Ovary (tissue), 10 donors: ENCODE measurements at regions of chr14 and their contacts with region 1.

Region 1: GRCh38 chr14:72942782-72943333 is 16.6 kb downstream of the DCAF4 start:
- DNase-seq: no peak
- H3K4me3 ChIP-seq: no peak overlapping the region
- H3K27ac ChIP-seq: no peak overlapping the region
- H3K4me1 ChIP-seq: peaks cover 4% of the 10 kb centered on the region
- H3K27me3 ChIP-seq: no peaks in the 10 kb centered on the region
- CTCF ChIP-seq: no peak
- EP300 ChIP-seq: no peak
- POLR2A ChIP-seq: no peak

Region 2: DNA sequence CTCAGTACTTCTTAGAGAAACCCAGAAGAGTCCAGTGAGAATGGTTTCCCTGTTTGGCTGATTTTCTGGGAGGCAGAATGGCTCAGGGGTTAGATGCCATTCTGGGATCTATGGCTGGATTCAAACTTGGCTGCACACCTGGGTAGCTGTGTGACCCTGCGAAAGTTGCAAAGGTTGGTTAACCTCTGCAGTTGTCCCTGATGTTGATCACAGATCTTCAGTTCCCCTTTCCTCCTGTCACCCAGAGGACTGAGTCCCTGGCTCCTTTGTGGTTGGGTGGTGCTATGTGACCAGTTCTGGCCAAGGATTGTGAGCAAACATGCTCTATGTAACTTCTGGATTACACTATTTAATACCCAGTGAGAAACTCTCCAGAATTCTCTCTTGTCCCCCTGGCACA is 592.6 kb before region 1 on chr14:
- intact Hi-C with region 1: no loop called
- DNase-seq: no peak
- H3K4me3 ChIP-seq: no peak overlapping the region
- H3K27ac ChIP-seq: no peak overlapping the region
- H3K4me1 ChIP-seq: no peaks in the 10 kb centered on the region
- H3K27me3 ChIP-seq: no peaks in the 10 kb centered on the region
- CTCF ChIP-seq: no peak
- EP300 ChIP-seq: no peak
- POLR2A ChIP-seq: no peak

Region 3: DNA sequence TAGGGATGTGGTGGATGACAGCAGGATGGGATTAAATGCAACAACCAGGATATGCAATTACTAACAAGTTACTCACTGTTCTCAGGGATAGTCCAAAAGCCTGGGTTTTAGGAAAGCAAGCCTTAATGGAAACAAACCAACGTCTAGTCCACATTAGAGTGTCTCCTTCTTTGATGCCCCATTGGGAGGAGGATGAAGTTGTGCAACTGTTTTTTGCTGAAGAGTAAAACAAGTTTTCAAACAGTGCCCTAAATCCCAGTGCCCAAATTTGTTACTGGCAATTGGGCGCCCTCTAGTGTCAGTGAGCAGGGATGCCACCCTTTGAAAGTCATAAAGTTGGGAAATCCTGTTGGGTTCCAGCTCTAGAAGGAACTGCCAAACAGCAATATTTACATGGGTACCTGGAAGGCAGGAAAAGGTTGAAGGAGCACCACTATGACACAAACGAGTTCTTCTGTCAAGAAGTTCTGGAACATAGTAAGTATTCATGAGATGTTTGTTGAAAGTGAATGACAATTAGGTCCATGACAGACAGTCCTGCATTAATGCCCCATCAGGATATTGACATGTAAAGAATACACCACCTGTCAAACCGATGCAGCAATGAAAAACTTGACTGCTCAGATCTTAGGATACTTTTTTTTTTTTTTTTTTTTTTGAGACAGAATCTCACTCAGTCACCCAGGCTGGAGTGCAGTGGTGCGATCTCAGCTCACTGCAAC is 37.9 kb before region 1 on chr14:
- intact Hi-C with region 1: loop called in 1 of 4 experiments (anchors 5 kb)
- DNase-seq: peak; percentile 66 to 82 (median 68)
- H3K4me3 ChIP-seq: no peak overlapping the region
- H3K27ac ChIP-seq: no peak overlapping the region
- H3K4me1 ChIP-seq: peaks cover 11% of the 10 kb centered on the region
- H3K27me3 ChIP-seq: no peaks in the 10 kb centered on the region
- CTCF ChIP-seq: peak; percentile 60 to 96 (median 95)
- EP300 ChIP-seq: no peak
- POLR2A ChIP-seq: peak; percentile 23